GM12878 (cell line): ENCODE measurements at regions of chr3 and their contacts with region 1.

Region 1: GRCh38 chr3:66472313-66473134 is 28.3 kb downstream of the LRIG1 start:
- DNase-seq: peak; percentile 72
- ATAC-seq: peak; percentile 84
- H3K4me3 ChIP-seq: peak overlapping the region; percentile 49; the same call in 1 of the 2 replicates
- H3K27ac ChIP-seq: peak overlapping the region; percentile 73
- H3K4me1 ChIP-seq: peaks cover 37% of the 10 kb centered on the region
- H3K27me3 ChIP-seq: no peaks in the 10 kb centered on the region
- CTCF ChIP-seq: no peak
- EP300 ChIP-seq: peak in 1 of 2 experiments; percentile 79; a peak in 1 of 4 replicates
- POLR2A ChIP-seq: no peak
- RAD21 ChIP-seq: 0 out of 2 replicates have a peak, but pooled peaks have one; percentile 1

Region 2: GRCh38 chr3:66386925-66387650 is 85.4 kb before region 1 on chr3:
- CTCF ChIA-PET with region 1: no interaction called
- POLR2A ChIA-PET with region 1: interaction called, 3 read pairs
- RAD21 ChIA-PET with region 1: interaction called, 4 read pairs
- SMC1A ChIA-PET with region 1: interaction called, 7 read pairs
- in situ Hi-C with region 1: no loop called
- intact Hi-C with region 1: loop called (anchors 1 kb)
- DNase-seq: peak; percentile 65
- ATAC-seq: peak; percentile 84
- H3K4me3 ChIP-seq: no peak overlapping the region
- H3K27ac ChIP-seq: peak overlapping the region; percentile 84
- H3K4me1 ChIP-seq: peaks cover 33% of the 10 kb centered on the region
- H3K27me3 ChIP-seq: no peaks in the 10 kb centered on the region
- CTCF ChIP-seq: no peak
- EP300 ChIP-seq: peak; percentile 40 to 66; a peak in 3 of 4 replicates
- POLR2A ChIP-seq: no peak; the same call in 1 of the 2 replicates
- RAD21 ChIP-seq: no peak

Region 3: DNA sequence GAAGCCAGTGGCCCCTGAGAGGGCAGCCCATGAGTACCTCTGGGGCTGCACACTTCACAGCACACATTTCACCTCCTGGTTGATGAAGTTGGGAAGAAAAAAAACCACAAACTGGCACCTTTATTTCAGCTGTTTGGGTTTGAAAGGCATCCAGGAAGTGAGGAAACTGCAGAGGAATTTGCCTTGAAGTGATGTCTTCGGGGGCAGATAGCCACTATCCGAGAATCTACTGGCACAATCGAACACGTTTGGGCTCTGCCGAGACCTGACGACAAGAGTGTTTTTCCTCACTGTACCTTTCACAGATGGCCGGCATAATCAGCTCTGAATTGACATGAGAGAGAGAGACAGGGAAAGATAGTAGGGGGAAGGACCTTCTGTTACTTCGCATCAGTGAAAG is 31.4 kb before region 1 on chr3:
- CTCF ChIA-PET with region 1: no interaction called
- POLR2A ChIA-PET with region 1: interaction called, 4 read pairs
- RAD21 ChIA-PET with region 1: interaction called, 10 read pairs
- SMC1A ChIA-PET with region 1: interaction called, 7 read pairs
- in situ Hi-C with region 1: no loop called
- intact Hi-C with region 1: no loop called
- DNase-seq: no peak
- ATAC-seq: no peak
- H3K4me3 ChIP-seq: no peak overlapping the region
- H3K27ac ChIP-seq: no peak overlapping the region
- H3K4me1 ChIP-seq: peaks cover 9% of the 10 kb centered on the region
- H3K27me3 ChIP-seq: no peaks in the 10 kb centered on the region
- CTCF ChIP-seq: no peak
- EP300 ChIP-seq: no peak
- POLR2A ChIP-seq: no peak
- RAD21 ChIP-seq: no peak

Region 4: DNA sequence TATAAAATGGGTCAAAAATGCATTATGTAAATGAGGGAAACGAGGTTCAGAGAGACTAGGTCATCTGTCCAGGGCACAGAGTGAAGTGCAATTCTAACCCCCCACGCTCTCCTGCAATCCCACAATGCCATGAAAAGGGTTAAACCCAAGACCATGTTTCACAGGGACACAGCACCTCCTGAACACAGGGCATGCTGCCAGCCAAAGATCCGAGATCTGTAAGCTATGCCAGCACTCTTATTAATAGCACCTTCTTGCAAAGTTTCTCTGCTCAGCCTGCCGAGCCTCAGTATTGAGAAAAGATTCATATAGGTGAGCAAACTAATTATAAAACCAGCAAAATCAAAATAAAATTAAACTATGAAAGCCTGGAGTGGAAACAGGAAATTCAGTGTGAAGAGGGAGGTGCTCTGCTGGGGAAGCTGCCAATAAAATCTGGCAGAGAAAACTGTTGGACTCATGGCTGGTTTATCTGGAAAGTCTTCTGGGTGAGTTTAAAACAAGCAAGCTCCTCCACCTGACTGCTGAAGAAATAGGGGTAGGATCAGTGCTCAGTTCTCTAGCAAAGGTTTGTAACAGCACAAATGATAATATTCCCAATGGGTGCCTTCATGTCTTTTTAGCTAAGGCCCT is 22.0 kb before region 1 on chr3:
- CTCF ChIA-PET with region 1: interaction called, 3 read pairs
- POLR2A ChIA-PET with region 1: interaction called, 6 read pairs
- RAD21 ChIA-PET with region 1: interaction called, 4 read pairs
- SMC1A ChIA-PET with region 1: interaction called, 10 read pairs
- in situ Hi-C with region 1: no loop called
- intact Hi-C with region 1: no loop called
- DNase-seq: no peak
- ATAC-seq: no peak
- H3K4me3 ChIP-seq: no peak overlapping the region
- H3K27ac ChIP-seq: no peak overlapping the region
- H3K4me1 ChIP-seq: peaks cover 9% of the 10 kb centered on the region
- H3K27me3 ChIP-seq: no peaks in the 10 kb centered on the region
- CTCF ChIP-seq: no peak
- EP300 ChIP-seq: no peak
- POLR2A ChIP-seq: no peak
- RAD21 ChIP-seq: no peak

Region 5: DNA sequence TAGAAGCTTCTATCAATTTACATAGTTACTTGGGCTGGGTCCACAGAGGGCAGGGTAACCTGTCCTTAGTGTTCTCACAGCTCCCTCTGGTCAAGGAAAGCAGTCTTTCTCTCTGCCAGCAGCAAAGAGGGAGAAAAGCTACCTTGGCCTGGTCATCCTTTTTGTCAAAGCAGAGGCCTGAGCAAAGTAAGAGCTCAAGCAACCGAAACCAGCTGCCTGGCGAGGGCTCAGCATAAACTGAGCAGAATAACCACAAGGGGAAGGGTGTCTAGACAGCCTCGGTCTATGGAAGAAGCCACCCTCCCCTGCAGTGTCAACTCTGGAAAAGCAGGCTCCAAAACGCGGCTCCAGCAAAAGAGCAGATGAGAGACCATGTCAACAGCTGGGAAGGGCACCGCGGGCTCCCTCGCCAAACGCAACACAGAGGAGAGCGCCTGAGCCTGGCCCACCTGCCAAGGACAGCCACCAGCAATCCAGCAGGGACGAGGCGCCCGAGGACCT is 10.9 kb after region 1 on chr3:
- CTCF ChIA-PET with region 1: interaction called, 9 read pairs
- POLR2A ChIA-PET with region 1: interaction called, 7 read pairs
- RAD21 ChIA-PET with region 1: interaction called, 23 read pairs
- SMC1A ChIA-PET with region 1: interaction called, 62 read pairs
- in situ Hi-C with region 1: no loop called
- intact Hi-C with region 1: loop called (anchors 1 kb)
- DNase-seq: no peak
- ATAC-seq: peak; percentile 35
- H3K4me3 ChIP-seq: no peak overlapping the region
- H3K27ac ChIP-seq: no peak overlapping the region
- H3K4me1 ChIP-seq: peaks cover 42% of the 10 kb centered on the region
- H3K27me3 ChIP-seq: no peaks in the 10 kb centered on the region
- CTCF ChIP-seq: no peak
- EP300 ChIP-seq: no peak
- POLR2A ChIP-seq: no peak
- RAD21 ChIP-seq: no peak

Region 6: DNA sequence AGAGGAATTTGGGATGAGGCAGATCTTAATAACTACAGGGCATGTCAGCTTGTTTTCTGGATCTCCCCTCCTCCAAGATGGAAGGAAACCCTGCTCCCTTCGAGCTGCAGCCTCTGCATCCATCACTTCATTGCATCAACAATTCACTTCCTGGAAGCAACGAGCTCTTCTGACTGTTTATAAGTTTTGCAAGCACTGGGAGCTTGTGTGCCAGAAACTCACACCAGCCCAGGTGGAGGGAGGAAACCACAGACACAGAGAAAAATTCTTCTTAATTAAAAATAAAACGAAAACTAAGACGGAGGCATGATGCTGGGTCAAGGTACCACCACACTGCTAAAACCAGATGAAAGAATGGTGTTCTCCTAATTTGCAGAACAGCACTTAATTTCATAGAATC is 17.7 kb after region 1 on chr3:
- CTCF ChIA-PET with region 1: interaction called, 15 read pairs
- POLR2A ChIA-PET with region 1: interaction called, 3 read pairs
- RAD21 ChIA-PET with region 1: interaction called, 15 read pairs
- SMC1A ChIA-PET with region 1: interaction called, 30 read pairs
- in situ Hi-C with region 1: no loop called
- intact Hi-C with region 1: no loop called
- DNase-seq: no peak
- ATAC-seq: peak; percentile 37
- H3K4me3 ChIP-seq: no peak overlapping the region
- H3K27ac ChIP-seq: no peak overlapping the region
- H3K4me1 ChIP-seq: peaks cover 19% of the 10 kb centered on the region
- H3K27me3 ChIP-seq: no peaks in the 10 kb centered on the region
- CTCF ChIP-seq: no peak
- EP300 ChIP-seq: no peak
- POLR2A ChIP-seq: no peak
- RAD21 ChIP-seq: no peak

Region 7: GRCh38 chr3:66675366-66675765 is 202.8 kb after region 1 on chr3:
- CTCF ChIA-PET with region 1: no interaction called
- POLR2A ChIA-PET with region 1: no interaction called
- RAD21 ChIA-PET with region 1: no interaction called
- SMC1A ChIA-PET with region 1: no interaction called
- in situ Hi-C with region 1: no loop called
- intact Hi-C with region 1: no loop called
- DNase-seq: no peak
- ATAC-seq: no peak
- H3K4me3 ChIP-seq: no peak overlapping the region
- H3K27ac ChIP-seq: no peak overlapping the region
- H3K4me1 ChIP-seq: no peaks in the 10 kb centered on the region
- H3K27me3 ChIP-seq: no peaks in the 10 kb centered on the region
- CTCF ChIP-seq: no peak
- EP300 ChIP-seq: no peak
- POLR2A ChIP-seq: no peak
- RAD21 ChIP-seq: no peak

Region 8: DNA sequence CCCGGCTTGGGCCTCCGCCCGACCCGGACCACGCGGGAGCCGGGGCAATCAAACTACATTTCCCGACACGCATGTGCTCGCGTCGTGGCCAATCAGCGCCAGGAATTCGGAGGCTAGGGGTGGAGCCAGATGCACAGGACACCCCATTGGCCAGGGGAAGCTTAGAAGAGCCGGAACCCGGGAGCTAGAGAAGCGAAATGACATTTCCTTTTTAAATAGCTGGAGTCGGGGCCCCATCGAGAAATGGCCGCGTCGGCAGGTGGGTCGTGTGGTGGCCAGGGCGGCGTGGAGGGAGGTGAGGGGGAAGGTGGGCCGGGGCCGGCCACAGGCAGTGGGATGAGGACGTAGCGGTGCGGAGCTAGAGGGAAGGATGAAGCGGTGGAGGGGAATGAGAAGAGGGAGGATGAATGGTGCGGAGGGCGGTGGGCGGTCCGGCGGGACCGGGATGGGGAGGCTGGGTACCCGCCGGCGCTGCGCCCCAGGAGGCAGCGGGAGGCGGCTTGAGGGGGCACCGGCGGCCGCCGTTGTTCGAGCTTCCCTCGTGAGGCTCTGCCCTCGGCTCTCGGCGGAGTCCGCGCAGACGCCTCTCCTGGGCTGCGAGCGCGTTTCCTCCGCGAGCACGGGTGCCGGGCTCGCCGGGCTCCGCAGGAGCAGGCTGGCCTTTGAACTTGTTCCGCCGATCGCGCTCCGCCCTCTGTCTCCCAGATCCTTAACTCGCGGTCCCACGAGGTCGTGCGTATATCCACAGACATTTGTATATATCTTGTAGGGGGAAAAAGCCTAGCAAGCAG is 525.8 kb after region 1 on chr3 and contains the start of gene KBTBD8:
- CTCF ChIA-PET with region 1: no interaction called
- POLR2A ChIA-PET with region 1: interaction called, 4 read pairs
- RAD21 ChIA-PET with region 1: no interaction called
- SMC1A ChIA-PET with region 1: no interaction called
- in situ Hi-C with region 1: no loop called
- intact Hi-C with region 1: loop called (anchors 10 kb)
- DNase-seq: peak; percentile 96
- ATAC-seq: peak; percentile 93
- H3K4me3 ChIP-seq: peak within 1 kb of the TSS; percentile 92
- H3K27ac ChIP-seq: peak within 1 kb of the TSS; percentile 74
- H3K4me1 ChIP-seq: peaks cover 8% of the 10 kb centered on the region; the same call in 1 of the 2 replicates
- H3K27me3 ChIP-seq: no peaks in the 10 kb centered on the region
- CTCF ChIP-seq: no peak
- EP300 ChIP-seq: no peak
- POLR2A ChIP-seq: peak; percentile 74; the same call in 1 of the 2 replicates
- RAD21 ChIP-seq: no peak
- polyA plus RNA-seq, gene KBTBD8: 8.5 to 9.2 TPM